ENCODE measurements at regions of chr6 and their contacts with region 1.

Region 1: DNA sequence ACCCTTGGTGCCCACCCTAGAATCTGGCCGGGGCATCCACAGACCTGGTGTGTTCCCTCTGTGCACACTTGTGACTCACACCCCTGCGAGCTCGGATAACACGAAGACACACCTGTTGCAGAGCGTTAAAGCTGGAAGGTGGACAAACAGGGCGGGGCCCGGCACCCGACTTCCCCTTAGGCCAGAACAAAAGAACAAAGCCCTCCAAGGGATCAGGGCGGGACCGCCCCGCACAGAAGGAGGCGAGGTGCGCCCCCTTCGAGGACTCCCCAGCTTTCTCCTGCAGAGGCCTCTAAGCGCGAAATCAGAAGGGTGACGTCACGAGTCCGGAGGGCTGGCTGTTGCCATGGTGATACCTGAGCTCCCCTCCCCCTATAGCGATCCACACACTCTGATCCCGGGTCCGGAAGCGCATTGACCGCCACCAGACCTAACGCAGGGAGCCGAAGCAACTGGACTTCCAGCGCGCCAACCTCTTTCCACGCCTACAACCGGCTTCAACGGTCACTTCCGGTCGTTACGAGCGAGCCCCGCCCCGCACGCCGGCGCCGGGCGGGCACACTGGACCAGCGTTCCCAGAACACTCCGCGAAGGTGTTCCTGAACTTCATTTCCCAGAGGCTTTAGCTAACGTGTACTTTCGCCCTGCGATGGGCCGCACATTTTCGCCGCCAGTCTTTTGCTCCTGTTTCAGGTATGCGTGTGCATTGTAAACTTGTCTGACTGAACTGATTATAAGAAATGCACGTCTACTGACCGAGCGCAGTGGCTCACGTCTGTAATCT is at the start of gene ZNF184:
- DNase-seq: peak; percentile 98
- total RNA-seq, gene ZNF184: 4.2 TPM

Region 2: DNA sequence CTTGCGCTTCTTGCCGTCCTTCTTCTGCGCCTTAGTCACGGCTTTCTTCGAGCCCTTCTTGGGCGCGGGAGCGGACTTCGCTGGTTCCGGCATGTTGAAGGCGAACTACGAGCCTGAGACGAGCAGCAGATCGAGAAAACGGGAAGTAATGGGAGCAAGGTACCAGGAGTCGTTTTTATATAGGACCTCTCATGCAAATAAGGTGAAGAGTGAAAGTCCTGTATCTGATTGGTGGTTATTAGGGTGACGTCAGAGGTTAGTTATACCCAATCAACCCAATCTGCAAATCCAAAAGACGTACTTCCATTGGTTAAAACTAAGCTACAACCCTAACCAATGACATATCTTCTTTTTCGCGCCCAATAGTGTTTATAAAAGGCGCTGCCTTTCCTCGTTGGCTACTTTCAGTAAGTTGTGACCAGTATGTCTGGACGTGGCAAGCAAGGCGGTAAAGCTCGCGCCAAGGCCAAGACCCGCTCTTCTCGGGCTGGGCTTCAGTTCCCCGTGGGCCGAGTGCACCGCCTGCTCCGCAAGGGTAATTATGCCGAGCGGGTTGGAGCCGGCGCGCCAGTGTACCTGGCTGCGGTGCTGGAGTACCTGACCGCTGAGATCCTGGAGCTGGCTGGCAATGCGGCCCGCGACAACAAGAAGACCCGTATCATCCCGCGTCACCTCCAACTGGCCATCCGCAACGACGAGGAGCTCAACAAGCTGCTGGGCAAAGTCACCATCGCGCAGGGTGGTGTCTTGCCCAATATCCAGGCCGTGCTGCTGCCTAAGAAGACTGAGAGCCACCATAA is 325.9 kb before region 1 on chr6:
- intact Hi-C with region 1: loop called (anchors 10 kb)
- DNase-seq: peak; percentile 88

Region 3: DNA sequence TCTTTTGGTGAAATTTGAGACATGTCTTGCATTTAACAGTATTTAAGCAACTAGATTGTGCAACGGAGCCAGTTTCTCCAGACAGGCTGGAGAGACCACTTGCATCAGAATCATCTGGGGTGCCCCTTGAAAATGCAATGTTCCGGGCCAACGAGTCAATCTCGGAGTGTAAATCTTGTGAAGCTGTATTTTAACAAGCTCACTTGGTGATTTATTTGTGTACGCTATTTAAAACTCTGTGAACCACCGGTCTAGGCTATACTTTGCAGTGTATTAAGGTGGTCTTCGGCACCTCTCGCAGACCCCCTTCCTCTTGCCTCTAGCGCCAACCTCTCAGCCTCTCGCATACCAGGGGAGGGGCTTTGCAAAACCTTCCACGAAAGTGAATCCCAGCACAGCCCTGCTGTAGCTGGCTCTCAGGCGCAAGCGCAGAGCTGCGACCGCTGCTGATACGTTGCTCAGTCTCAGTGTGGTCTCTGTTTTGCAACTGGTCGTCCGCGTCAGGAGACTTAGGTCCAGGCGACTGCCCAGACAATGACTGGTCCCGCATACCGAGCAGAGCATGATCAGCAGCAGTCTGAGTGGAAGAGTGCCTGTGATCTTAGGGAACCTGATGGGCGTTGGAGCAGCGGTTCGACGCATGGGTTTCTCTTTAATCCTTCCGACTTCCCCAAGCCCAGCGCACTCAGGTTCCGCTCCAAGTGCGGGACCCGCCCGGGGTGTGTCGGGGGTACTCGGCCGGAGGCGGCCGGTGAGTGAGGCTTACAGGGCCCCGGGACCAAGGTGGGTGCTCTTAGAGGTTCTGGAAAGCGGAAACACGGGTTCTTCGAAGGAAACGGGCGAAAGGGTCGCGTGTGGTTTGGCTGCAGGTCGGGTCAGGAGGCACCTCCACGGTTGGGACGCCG is 84.3 kb before region 1 on chr6 and contains the start of gene ZNF391:
- intact Hi-C with region 1: loop called (anchors 10 kb)
- DNase-seq: peak; percentile 89
- total RNA-seq, gene ZNF391: 0.62 TPM

Region 4: DNA sequence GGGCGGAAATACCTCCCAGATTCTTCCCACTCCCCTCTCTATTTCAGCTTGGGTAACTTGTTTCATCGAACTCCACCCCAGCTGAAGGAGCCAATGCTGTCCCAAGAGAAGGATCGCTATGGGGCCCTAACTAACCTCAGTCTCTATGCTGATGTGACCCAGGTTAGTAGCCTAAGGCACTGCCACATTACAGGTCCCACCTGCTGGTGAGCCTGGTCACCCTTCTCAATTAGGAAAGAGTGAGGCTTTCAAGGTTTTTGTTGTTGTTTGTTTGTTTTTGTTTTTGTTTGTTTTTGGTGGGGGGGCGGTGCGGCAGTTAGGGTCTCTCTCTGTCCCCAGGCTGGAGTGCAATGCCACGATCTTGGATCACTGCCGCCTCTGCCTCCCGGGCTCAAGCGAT is 271.0 kb after region 1 on chr6:
- intact Hi-C with region 1: no loop called
- DNase-seq: no peak

Region 5: DNA sequence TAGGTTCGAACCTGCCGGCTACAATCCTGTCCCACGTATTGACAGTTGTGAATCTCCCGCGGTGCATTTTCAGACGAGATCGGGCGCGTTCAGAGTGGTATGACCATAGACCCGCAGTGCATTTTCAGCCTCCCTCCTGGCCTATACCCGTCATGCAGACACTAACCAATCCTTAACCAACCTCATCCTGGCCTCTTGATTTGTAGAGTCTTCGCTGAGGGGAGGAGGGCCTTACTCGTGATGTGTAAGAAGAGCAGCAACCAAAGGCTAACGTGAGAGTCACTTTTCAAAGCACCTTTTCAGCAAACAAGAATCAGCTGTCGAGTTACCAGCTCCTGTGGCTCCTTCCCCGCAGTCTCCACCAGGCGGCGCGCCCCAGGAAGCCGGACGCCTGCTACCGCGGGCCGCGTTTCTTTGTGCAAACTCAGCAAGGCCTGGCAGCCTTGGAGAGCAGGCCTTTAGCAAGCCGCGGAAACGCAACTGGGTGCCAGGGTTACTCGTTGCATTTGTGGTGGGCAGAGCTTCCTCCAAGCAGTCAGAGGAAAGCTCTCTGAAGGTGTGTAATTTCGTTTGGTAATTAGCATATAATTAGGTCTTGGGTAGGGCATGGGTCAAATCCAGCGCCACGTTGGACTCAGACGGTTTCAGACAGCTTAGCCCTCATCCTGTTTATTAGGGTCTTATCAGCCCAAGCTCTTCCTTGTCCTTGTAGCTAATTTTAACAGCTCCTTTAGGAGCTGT is 299.6 kb after region 1 on chr6:
- intact Hi-C with region 1: no loop called
- DNase-seq: peak; percentile 93

Measured in cardiac septum (tissue), 1 donor.